ENCODE measurements at regions of chr14 and their contacts with region 1.

Region 1: GRCh38 chr14:68682166-68683103 is 110.4 kb downstream of the ZFP36L1 start:
- DNase-seq: peak; percentile 41 to 81
- H3K4me3 ChIP-seq: no peak overlapping the region
- H3K27ac ChIP-seq: peak overlapping the region; percentile 65 to 84
- H3K4me1 ChIP-seq: peaks cover 13 to 40% of the 10 kb centered on the region in 2 donors
- H3K27me3 ChIP-seq: no peaks in the 10 kb centered on the region
- CTCF ChIP-seq: no peak

Region 2: DNA sequence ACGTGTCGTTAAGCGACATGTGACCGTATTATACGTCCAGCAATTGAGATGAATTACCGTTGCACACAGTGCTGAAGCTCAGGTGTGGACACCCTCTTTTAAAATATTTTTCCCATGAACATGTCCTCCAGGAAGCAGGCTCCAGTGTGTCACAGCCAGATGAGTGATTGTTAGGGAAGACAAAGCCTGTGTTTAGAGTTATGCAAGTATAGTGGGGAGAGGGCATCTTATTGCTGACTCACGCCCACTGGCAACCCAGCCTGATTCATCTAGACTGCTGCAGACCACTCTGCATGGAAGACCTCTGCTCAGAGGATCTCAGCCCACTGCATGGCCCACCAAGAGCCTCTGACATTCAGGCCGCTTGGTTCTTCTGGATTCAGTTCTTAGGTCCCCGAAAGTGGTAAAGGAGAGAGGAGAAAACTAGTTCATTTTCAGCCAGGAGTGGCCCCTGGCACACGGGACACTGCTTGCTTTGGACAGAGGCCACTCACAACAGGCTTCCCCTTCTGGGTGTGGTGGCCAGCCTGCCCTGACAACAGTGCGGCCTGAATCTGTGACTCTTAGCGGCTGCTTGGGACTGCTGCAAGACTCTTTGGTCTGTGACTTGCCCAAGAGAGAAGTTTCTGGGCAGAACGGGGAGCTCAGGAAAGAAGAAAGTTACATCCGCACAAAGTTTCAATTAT is 155.9 kb before region 1 on chr14:
- intact Hi-C with region 1: loop called (anchors 5 kb)
- DNase-seq: peak; percentile 52 to 81
- H3K4me3 ChIP-seq: peak overlapping the region in 1 of 2 donors; percentile 14
- H3K27ac ChIP-seq: peak overlapping the region; percentile 85 to 90
- H3K4me1 ChIP-seq: peaks cover 20 to 52% of the 10 kb centered on the region in 2 donors
- H3K27me3 ChIP-seq: no peaks in the 10 kb centered on the region
- CTCF ChIP-seq: no peak

Region 3: DNA sequence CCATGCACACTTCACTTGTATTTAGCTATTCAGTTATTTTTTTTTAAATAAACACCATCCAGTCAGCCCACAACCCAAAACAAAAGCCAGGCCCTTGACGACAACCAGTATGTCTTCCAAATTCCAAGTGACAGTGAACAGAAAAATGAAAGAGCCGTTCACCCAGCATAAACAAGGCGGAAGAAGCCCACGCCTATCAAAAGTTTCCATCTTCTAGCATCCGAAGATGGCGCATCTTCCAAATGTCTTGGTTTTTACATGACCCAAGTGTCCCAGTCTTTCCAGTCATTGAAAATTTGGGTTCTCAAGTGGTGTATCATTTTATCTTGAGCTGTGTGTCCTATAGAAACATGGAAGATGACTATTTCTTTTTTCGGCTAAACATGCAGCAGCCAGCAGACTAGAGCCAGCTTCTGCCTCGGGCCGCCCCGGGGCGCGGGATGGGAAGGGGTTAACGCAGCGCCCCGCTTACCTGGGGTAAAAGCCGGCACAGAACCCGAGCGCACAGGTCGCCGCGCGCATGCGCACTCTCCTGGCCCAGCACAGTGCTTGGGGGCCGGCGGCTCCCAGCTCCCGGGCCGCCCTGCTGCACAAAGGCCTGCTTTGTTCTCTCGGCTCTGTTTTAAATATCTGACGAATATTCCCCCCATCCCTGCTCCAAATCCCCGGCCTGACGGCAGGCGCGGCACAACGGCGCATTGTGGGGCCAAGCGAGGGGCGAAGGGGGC is 54.4 kb before region 1 on chr14:
- intact Hi-C with region 1: loop called (anchors 1 kb)
- DNase-seq: no peak
- H3K4me3 ChIP-seq: peak overlapping the region in 1 of 2 donors; percentile 37
- H3K27ac ChIP-seq: peak overlapping the region; percentile 75 to 81
- H3K4me1 ChIP-seq: peaks cover 8 to 33% of the 10 kb centered on the region in 2 donors
- H3K27me3 ChIP-seq: no peaks in the 10 kb centered on the region
- CTCF ChIP-seq: no peak

Region 4: GRCh38 chr14:68775143-68776126 is 93.0 kb after region 1 on chr14:
- intact Hi-C with region 1: no loop called
- DNase-seq: peak in 1 of 2 donors; percentile 49
- H3K4me3 ChIP-seq: no peak overlapping the region
- H3K27ac ChIP-seq: peak overlapping the region; percentile 43 to 66
- H3K4me1 ChIP-seq: peaks cover 6 to 13% of the 10 kb centered on the region in 2 donors
- H3K27me3 ChIP-seq: no peaks in the 10 kb centered on the region
- CTCF ChIP-seq: no peak